ENCODE measurements at regions of chr2 and their contacts with region 1.

Region 1: DNA sequence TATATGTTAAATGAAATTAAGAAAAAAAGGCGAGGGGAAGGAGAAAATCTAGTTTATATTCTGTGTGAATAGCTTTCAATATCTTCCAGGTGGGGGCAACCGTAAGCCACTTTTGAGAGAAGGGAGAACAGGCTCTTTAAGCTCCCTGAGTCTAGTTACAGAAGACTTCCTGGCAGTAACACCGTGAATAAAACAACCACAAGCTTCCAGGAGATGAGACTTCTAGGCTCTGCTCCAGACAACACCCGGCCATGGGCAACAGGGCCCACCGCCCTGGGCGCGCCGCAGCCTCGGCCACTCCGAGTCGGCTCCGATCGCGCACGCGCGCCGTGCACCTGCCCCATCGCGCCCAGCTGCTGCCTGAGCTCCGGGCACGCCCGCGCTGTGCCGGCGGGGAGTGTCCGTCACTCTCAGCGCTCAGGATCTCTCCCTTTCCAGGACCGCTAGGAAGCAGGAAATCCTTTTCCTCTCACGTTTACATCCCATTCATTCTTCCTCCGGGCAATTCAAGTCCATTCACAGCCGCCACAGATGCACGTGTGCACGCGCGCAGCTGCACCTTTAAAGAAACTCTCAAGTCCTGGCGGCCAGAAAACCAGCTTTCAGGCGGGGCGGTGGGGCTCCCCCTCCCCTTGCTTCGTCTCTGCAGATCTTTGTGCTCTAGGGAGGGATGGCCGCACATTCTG is 19.4 kb upstream of the PAX3 start:
- DNase-seq: peak; percentile 90
- H3K4me3 ChIP-seq: peak overlapping the region; percentile 20 to 69 (median 50)
- H3K27ac ChIP-seq: no peak overlapping the region
- H3K4me1 ChIP-seq: peaks cover 5 to 30% (median 20%) of the 10 kb centered on the region in 6 donors
- H3K27me3 ChIP-seq: peaks cover 2 to 97% (median 54%) of the 10 kb centered on the region in 7 donors
- CTCF ChIP-seq: peak in 5 of 11 experiments; percentile 19 to 33 (median 21)
- POLR2A ChIP-seq: no peak

Region 2: DNA sequence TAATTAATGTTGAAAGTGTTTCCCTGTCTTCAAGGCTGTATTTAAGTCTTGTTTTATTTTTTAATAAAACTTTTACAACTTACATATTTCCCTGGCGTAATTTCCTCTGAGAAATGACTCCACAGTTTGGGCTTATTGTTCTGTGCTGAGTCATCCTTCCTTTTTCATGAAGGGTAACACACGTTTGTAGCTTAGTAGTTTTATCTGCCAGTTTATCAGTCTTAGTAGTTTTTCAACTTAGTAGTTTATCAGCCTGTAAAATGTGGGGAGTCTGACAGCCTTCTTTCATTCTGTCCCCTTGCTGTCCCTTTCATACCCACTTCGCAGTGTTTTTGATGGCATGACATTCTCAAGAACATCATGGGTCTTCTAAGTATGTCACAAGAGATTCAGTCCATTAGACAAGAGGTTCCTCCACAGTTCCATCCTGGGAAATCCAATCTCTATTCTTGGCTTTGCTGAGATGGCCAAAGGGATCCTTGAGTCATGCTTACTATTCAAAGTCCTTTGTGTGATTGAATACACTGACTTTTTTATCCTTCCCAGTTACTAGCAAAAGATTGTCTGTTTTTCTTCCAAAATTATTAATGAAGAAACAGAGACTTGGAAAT is 46.2 kb after region 1 on chr2:
- intact Hi-C with region 1: no loop called
- DNase-seq: no peak
- H3K4me3 ChIP-seq: no peak overlapping the region
- H3K27ac ChIP-seq: peak overlapping the region in 3 of 8 donors; percentile 10 to 60 (median 52)
- H3K4me1 ChIP-seq: no peaks in the 10 kb centered on the region
- H3K27me3 ChIP-seq: peaks cover 0 to 11% (median 0%) of the 10 kb centered on the region in 7 donors
- CTCF ChIP-seq: no peak
- POLR2A ChIP-seq: no peak

Region 3: GRCh38 chr2:222424729-222425671 is 106.8 kb after region 1 on chr2:
- intact Hi-C with region 1: no loop called
- DNase-seq: peak; percentile 79
- H3K4me3 ChIP-seq: peak overlapping the region; percentile 31 to 78 (median 51)
- H3K27ac ChIP-seq: peak overlapping the region in 4 of 8 donors; percentile 15 to 57 (median 48)
- H3K4me1 ChIP-seq: peaks cover 0 to 34% (median 22%) of the 10 kb centered on the region in 6 donors
- H3K27me3 ChIP-seq: peaks cover 0 to 62% (median 27%) of the 10 kb centered on the region in 7 donors
- CTCF ChIP-seq: no peak
- POLR2A ChIP-seq: no peak

Region 4: DNA sequence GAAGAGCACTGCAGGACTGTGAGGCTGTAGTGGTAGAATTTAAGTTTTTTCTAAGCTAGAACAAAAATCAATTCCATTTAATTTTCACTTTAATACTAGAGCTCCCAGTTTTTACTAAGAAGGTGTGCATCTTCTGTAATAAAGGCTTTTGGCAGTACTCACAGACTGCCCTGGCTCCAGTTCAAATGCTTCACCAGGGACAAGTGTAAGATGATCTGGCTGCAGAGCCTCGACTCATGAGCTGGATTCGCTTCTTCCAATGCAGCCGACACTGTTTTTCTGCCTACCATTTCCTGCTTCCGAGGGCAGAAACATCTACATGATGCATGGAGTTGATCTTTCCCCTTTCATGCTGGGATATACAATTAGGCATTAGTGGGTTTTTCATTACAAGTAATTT is 250.7 kb after region 1 on chr2:
- intact Hi-C with region 1: loop called (anchors 5 kb)
- DNase-seq: no peak
- H3K4me3 ChIP-seq: no peak overlapping the region
- H3K27ac ChIP-seq: no peak overlapping the region
- H3K4me1 ChIP-seq: no peaks in the 10 kb centered on the region
- H3K27me3 ChIP-seq: no peaks in the 10 kb centered on the region
- CTCF ChIP-seq: no peak
- POLR2A ChIP-seq: no peak

Measured in spleen (tissue), 13 donors.